Activated B cell treated with CpG ODN at 0.5 μM for 24 hours (primary cell): ENCODE measurements at regions of chr10 and their contacts with region 1.

Region 1: GRCh38 chr10:45235798-45236231 is 79.6 kb downstream of the OR13A1 start:
- DNase-seq: no peak
- ATAC-seq: no peak
- H3K4me3 Mint-ChIP-seq: no peak overlapping the region
- H3K27ac Mint-ChIP-seq: no peak overlapping the region
- H3K4me1 Mint-ChIP-seq: no peaks in the 10 kb centered on the region
- H3K27me3 Mint-ChIP-seq: peaks cover 3% of the 10 kb centered on the region
- CTCF ChIP-seq: no peak

Region 2: DNA sequence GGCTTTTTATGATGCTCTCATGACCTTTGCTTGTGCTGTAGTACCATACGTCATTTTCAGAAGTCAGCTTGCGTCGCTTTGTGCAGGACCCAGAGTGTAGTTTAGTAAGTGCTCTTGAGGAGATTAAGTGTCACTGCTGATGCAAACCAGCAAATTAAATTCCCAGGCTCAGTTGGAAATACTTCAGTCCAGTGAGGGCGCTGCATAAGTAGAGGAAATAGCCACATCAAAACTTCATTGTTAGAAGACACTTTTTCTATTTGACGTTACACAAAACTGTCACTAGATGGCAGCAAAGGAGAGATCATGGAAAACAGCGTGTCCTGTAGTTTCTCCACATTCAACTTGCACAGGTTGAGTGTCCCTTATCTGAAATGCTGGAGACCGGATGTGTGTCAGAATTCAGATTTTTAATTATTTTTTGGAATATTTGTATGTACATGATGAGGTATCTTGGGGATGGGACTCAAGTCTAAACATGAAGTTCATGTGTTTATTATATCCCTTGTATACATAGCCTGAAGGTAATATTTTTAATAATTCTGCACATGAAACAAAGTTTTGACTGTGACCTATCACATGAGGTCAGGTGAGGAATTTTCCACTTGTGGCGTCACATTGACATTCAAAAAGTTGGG is 227.2 kb before region 1 on chr10:
- CTCF ChIA-PET with region 1: no interaction called
- POLR2A ChIA-PET with region 1: no interaction called
- intact Hi-C with region 1: loop called (anchors 5 kb)
- DNase-seq: no peak
- ATAC-seq: peak; percentile 68
- H3K4me3 Mint-ChIP-seq: no peak overlapping the region
- H3K27ac Mint-ChIP-seq: no peak overlapping the region
- H3K4me1 Mint-ChIP-seq: no peaks in the 10 kb centered on the region
- H3K27me3 Mint-ChIP-seq: peaks cover 3% of the 10 kb centered on the region
- CTCF ChIP-seq: peak; percentile 61

Region 3: GRCh38 chr10:46228563-46229071 is 992.8 kb after region 1 on chr10:
- CTCF ChIA-PET with region 1: no interaction called
- POLR2A ChIA-PET with region 1: no interaction called
- intact Hi-C with region 1: loop called (anchors 10 kb)
- DNase-seq: no peak
- ATAC-seq: peak; percentile 72
- H3K4me3 Mint-ChIP-seq: no peak overlapping the region
- H3K27ac Mint-ChIP-seq: no peak overlapping the region
- H3K4me1 Mint-ChIP-seq: no peaks in the 10 kb centered on the region
- H3K27me3 Mint-ChIP-seq: no peaks in the 10 kb centered on the region
- CTCF ChIP-seq: no peak